ENCODE measurements at regions of chr6 and their contacts with region 1.

Region 1: GRCh38 chr6:105424175-105424783 is 21.4 kb upstream of the PREP start:
- DNase-seq: peak; percentile 29 to 77 (median 52)
- ATAC-seq: peak; percentile 74
- H3K4me3 ChIP-seq: no peak overlapping the region
- H3K4me3 Mint-ChIP-seq: no peak overlapping the region
- H3K27ac ChIP-seq: no peak overlapping the region
- H3K27ac Mint-ChIP-seq: no peak overlapping the region
- H3K4me1 ChIP-seq: no peaks in the 10 kb centered on the region
- H3K4me1 Mint-ChIP-seq: peaks cover 4% of the 10 kb centered on the region
- H3K27me3 ChIP-seq: no peaks in the 10 kb centered on the region
- H3K27me3 Mint-ChIP-seq: peaks cover 7% of the 10 kb centered on the region
- CTCF ChIP-seq: peak; percentile 77

Region 2: DNA sequence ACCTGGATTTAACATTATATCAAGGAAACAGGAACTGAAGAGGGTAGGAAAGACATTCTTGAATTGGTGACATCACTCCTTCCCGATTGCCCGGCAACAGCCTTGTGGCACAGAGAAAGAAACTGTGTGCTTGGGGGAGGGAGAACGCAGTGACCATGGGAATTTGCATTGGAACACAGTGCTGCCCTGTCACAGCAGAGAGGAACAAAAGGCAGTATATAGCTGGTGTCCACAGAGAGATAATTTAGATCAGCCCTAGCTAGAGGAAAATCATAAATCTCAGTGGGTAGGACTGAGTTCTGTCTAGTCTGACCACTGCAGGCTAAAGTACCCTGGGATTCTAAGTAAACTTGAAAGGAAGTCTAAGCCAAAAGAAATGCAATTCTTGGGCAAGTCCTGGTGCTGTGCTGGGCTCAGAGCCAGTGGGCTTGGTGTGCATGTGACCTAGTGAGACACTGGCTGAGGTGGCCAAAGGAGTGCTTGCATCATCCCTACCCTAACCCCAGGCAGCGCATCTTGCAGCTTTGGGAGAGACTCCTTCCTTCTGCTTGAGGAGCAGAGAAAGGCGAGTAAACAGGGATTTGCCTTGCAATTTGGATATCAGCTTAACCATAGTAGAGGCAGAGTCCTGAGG is 1262.1 kb before region 1 on chr6:
- CTCF ChIA-PET with region 1: no interaction called
- POLR2A ChIA-PET with region 1: no interaction called
- intact Hi-C with region 1: no loop called
- DNase-seq: no peak
- ATAC-seq: no peak
- H3K4me3 ChIP-seq: no peak overlapping the region
- H3K4me3 Mint-ChIP-seq: no peak overlapping the region
- H3K27ac ChIP-seq: no peak overlapping the region
- H3K27ac Mint-ChIP-seq: no peak overlapping the region
- H3K4me1 ChIP-seq: no peaks in the 10 kb centered on the region
- H3K4me1 Mint-ChIP-seq: no peaks in the 10 kb centered on the region
- H3K27me3 ChIP-seq: no peaks in the 10 kb centered on the region
- H3K27me3 Mint-ChIP-seq: no peaks in the 10 kb centered on the region
- CTCF ChIP-seq: no peak

Region 3: DNA sequence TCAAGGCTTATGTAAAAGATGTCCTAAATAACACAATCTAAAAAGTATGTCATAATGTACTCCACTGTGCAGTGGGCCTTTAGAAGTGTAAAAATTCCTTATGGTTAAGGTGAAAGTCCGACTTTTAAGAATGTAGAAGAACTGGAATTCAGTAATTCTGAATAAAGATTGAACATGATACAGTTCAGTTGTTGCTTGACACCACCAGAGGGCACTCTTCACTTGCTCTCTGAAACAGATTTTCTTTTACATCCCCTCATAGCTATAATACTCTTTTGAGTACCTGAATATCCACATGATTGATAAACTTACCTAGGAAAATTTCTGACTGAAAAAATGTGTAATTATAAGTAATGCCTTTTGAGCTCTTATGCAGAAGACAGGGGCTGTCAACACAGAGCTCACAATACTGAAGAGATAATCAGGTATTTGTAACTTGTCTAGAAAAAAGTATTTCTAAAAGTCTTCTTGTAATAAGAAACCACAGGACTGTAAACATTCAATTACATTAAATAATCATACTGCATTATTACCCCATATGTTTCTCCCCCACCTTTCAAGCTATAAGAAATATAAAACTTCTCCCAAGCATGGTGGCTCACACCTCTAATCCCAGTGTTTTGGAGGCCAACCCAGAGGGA is 336.6 kb before region 1 on chr6:
- CTCF ChIA-PET with region 1: interaction called, 3 read pairs
- POLR2A ChIA-PET with region 1: no interaction called
- intact Hi-C with region 1: loop called (anchors 1 kb)
- DNase-seq: peak in 6 of 14 experiments; percentile 2 to 69 (median 41)
- ATAC-seq: no peak
- H3K4me3 ChIP-seq: no peak overlapping the region
- H3K4me3 Mint-ChIP-seq: no peak overlapping the region
- H3K27ac ChIP-seq: no peak overlapping the region
- H3K27ac Mint-ChIP-seq: no peak overlapping the region
- H3K4me1 ChIP-seq: no peaks in the 10 kb centered on the region
- H3K4me1 Mint-ChIP-seq: no peaks in the 10 kb centered on the region
- H3K27me3 ChIP-seq: peaks cover 0 to 5% of the 10 kb centered on the region in 2 experiments
- H3K27me3 Mint-ChIP-seq: peaks cover 6% of the 10 kb centered on the region
- CTCF ChIP-seq: peak; percentile 78

Region 4: DNA sequence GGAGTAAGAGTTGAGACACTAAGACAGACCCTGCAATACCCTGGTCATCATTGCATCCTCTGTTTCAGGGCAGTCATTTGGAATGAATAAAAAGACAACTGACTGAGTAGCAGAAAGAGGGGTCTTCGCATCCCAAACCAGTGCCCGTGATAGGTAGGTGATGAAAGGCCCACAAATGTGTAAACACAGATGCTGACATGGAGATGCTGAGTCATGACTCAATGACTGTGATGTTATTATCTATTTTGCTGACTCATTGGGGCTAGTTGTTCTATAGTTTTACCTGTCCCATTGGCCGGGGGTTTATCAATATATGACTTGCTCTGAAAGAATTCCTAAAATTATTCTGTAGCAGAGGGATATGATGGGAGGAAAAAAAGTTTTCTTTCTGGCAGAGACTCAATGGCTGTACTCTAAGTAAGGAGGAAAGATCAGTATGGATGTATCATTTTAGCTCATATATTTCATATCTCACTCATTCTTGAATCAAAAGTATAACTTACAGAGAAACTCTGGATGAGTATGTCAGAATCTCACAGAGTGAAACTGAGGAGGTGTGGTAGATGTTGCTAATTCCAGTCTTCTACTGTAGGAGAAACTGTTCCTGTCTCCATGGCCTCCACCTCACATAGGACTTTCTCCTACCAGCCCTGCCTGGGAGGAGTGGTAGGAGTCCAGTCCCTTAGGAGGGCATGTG is 98.5 kb after region 1 on chr6:
- CTCF ChIA-PET with region 1: no interaction called
- POLR2A ChIA-PET with region 1: no interaction called
- intact Hi-C with region 1: no loop called
- DNase-seq: no peak
- ATAC-seq: no peak
- H3K4me3 ChIP-seq: no peak overlapping the region
- H3K4me3 Mint-ChIP-seq: no peak overlapping the region
- H3K27ac ChIP-seq: no peak overlapping the region
- H3K27ac Mint-ChIP-seq: no peak overlapping the region
- H3K4me1 ChIP-seq: no peaks in the 10 kb centered on the region
- H3K4me1 Mint-ChIP-seq: no peaks in the 10 kb centered on the region
- H3K27me3 ChIP-seq: no peaks in the 10 kb centered on the region
- H3K27me3 Mint-ChIP-seq: peaks cover 6% of the 10 kb centered on the region
- CTCF ChIP-seq: no peak

Measured in CD4-positive, alpha-beta T cell (primary cell).